CD8-positive, alpha-beta T cell (primary cell): ENCODE measurements at regions of chr13 and their contacts with region 1.

Region 1: GRCh38 chr13:91313103-91313502 is 34.4 kb upstream of the MIR17HG start:
- DNase-seq: peak in 3 of 9 experiments; percentile 19 to 69 (median 57)
- ATAC-seq: peak; percentile 58
- H3K4me3 ChIP-seq: no peak overlapping the region
- H3K4me3 Mint-ChIP-seq: no peak overlapping the region
- H3K27ac ChIP-seq: no peak overlapping the region
- H3K27ac Mint-ChIP-seq: no peak overlapping the region
- H3K4me1 ChIP-seq: no peaks in the 10 kb centered on the region
- H3K4me1 Mint-ChIP-seq: peaks cover 4% of the 10 kb centered on the region
- H3K27me3 ChIP-seq: no peaks in the 10 kb centered on the region
- H3K27me3 Mint-ChIP-seq: peaks cover 18% of the 10 kb centered on the region
- CTCF ChIP-seq: peak; percentile 63

Region 2: GRCh38 chr13:90622541-90622940 is 690.6 kb before region 1 on chr13:
- CTCF ChIA-PET with region 1: no interaction called
- POLR2A ChIA-PET with region 1: no interaction called
- intact Hi-C with region 1: no loop called
- DNase-seq: no peak
- ATAC-seq: no peak
- H3K4me3 ChIP-seq: no peak overlapping the region
- H3K4me3 Mint-ChIP-seq: no peak overlapping the region
- H3K27ac ChIP-seq: no peak overlapping the region
- H3K27ac Mint-ChIP-seq: no peak overlapping the region
- H3K4me1 ChIP-seq: no peaks in the 10 kb centered on the region
- H3K4me1 Mint-ChIP-seq: no peaks in the 10 kb centered on the region
- H3K27me3 ChIP-seq: no peaks in the 10 kb centered on the region
- H3K27me3 Mint-ChIP-seq: no peaks in the 10 kb centered on the region
- CTCF ChIP-seq: no peak

Region 3: GRCh38 chr13:91348906-91349435 is 35.9 kb after region 1 on chr13:
- CTCF ChIA-PET with region 1: interaction called, 6 read pairs
- POLR2A ChIA-PET with region 1: interaction called, 5 read pairs
- intact Hi-C with region 1: loop called (anchors 1 to 2 kb)
- DNase-seq: peak; percentile 82 to 96 (median 92)
- ATAC-seq: peak; percentile 66
- H3K4me3 ChIP-seq: peak overlapping the region; percentile 57 to 82
- H3K4me3 Mint-ChIP-seq: peak overlapping the region; percentile 85
- H3K27ac ChIP-seq: peak overlapping the region in 1 of 2 experiments; percentile 77
- H3K27ac Mint-ChIP-seq: peak overlapping the region; percentile 74
- H3K4me1 ChIP-seq: peaks cover 27% of the 10 kb centered on the region
- H3K4me1 Mint-ChIP-seq: peaks cover 47% of the 10 kb centered on the region
- H3K27me3 ChIP-seq: no peaks in the 10 kb centered on the region
- H3K27me3 Mint-ChIP-seq: no peaks in the 10 kb centered on the region
- CTCF ChIP-seq: peak; percentile 85

Region 4: GRCh38 chr13:91398413-91399272 is 85.5 kb after region 1 on chr13 and contains the start of gene GPC5:
- CTCF ChIA-PET with region 1: no interaction called
- POLR2A ChIA-PET with region 1: no interaction called
- intact Hi-C with region 1: loop called in 1 of 2 experiments (anchors 2 kb)
- DNase-seq: peak; percentile 61 to 89 (median 78)
- ATAC-seq: peak; percentile 100
- H3K4me3 ChIP-seq: peak within 1 kb of the TSS; percentile 45 to 51
- H3K4me3 Mint-ChIP-seq: peak within 1 kb of the TSS; percentile 83
- H3K27ac ChIP-seq: no peak within 1 kb of the TSS
- H3K27ac Mint-ChIP-seq: no peak within 1 kb of the TSS
- H3K4me1 ChIP-seq: peaks cover 19% of the 10 kb centered on the region
- H3K4me1 Mint-ChIP-seq: peaks cover 14% of the 10 kb centered on the region
- H3K27me3 ChIP-seq: peaks cover 12 to 15% of the 10 kb centered on the region in 2 experiments
- H3K27me3 Mint-ChIP-seq: peaks cover 39% of the 10 kb centered on the region
- CTCF ChIP-seq: no peak
- total RNA-seq, gene GPC5: 0.14 TPM in 1 of 2 experiments, not detected in the other

Region 5: DNA sequence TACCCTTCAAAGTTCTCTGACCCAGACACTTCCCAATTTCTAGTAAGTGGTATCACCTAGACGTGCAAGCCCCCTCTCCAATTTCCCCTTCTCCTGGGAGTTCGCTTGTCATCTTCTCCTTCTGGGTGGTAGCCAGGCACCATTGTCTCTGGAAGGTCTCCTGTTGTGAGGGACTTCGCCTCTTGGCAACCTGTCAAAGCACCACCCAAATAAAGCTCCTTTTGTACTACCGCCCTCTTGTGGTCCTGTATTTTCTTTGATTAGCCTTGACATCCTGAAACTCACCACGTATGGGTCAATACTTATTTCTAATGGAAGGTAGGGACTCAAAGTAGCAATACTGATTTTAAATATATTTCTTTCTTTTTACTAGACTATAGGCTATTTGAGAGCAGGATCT is 93.5 kb after region 1 on chr13:
- CTCF ChIA-PET with region 1: interaction called, 18 read pairs
- POLR2A ChIA-PET with region 1: no interaction called
- intact Hi-C with region 1: loop called (anchors 1 to 5 kb)
- DNase-seq: peak in 3 of 9 experiments; percentile 16 to 62 (median 53)
- ATAC-seq: peak; percentile 14
- H3K4me3 ChIP-seq: no peak overlapping the region
- H3K4me3 Mint-ChIP-seq: no peak overlapping the region
- H3K27ac ChIP-seq: no peak overlapping the region
- H3K27ac Mint-ChIP-seq: no peak overlapping the region
- H3K4me1 ChIP-seq: no peaks in the 10 kb centered on the region
- H3K4me1 Mint-ChIP-seq: no peaks in the 10 kb centered on the region
- H3K27me3 ChIP-seq: no peaks in the 10 kb centered on the region
- H3K27me3 Mint-ChIP-seq: peaks cover 17% of the 10 kb centered on the region
- CTCF ChIP-seq: no peak

Region 6: GRCh38 chr13:91459485-91459884 is 146.4 kb after region 1 on chr13:
- CTCF ChIA-PET with region 1: interaction called, 3 read pairs
- POLR2A ChIA-PET with region 1: no interaction called
- intact Hi-C with region 1: loop called (anchors 1 kb)
- DNase-seq: peak in 2 of 9 experiments; percentile 6 to 26
- ATAC-seq: no peak
- H3K4me3 ChIP-seq: no peak overlapping the region
- H3K4me3 Mint-ChIP-seq: no peak overlapping the region
- H3K27ac ChIP-seq: no peak overlapping the region
- H3K27ac Mint-ChIP-seq: no peak overlapping the region
- H3K4me1 ChIP-seq: no peaks in the 10 kb centered on the region
- H3K4me1 Mint-ChIP-seq: no peaks in the 10 kb centered on the region
- H3K27me3 ChIP-seq: no peaks in the 10 kb centered on the region
- H3K27me3 Mint-ChIP-seq: peaks cover 19% of the 10 kb centered on the region
- CTCF ChIP-seq: no peak

Region 7: GRCh38 chr13:91722267-91722884 is 409.3 kb after region 1 on chr13:
- CTCF ChIA-PET with region 1: interaction called, 5 read pairs
- POLR2A ChIA-PET with region 1: no interaction called
- intact Hi-C with region 1: loop called (anchors 1 kb)
- DNase-seq: peak in 2 of 9 experiments; percentile 17 to 24
- ATAC-seq: no peak
- H3K4me3 ChIP-seq: no peak overlapping the region
- H3K4me3 Mint-ChIP-seq: no peak overlapping the region
- H3K27ac ChIP-seq: no peak overlapping the region
- H3K27ac Mint-ChIP-seq: no peak overlapping the region
- H3K4me1 ChIP-seq: no peaks in the 10 kb centered on the region
- H3K4me1 Mint-ChIP-seq: no peaks in the 10 kb centered on the region
- H3K27me3 ChIP-seq: no peaks in the 10 kb centered on the region
- H3K27me3 Mint-ChIP-seq: no peaks in the 10 kb centered on the region
- CTCF ChIP-seq: peak; percentile 60